ENCODE measurements at regions of chr10 and their contacts with region 1.

Region 1: GRCh38 chr10:91923371-91924211 is at the start of gene BTAF1:
- DNase-seq: peak; percentile 92 to 96
- ATAC-seq: peak; percentile 99 to 100 (median 100)
- H3K4me3 ChIP-seq: peak within 1 kb of the TSS; percentile 80
- H3K27ac ChIP-seq: peak within 1 kb of the TSS; percentile 95
- H3K4me1 ChIP-seq: peaks cover 26% of the 10 kb centered on the region
- H3K27me3 ChIP-seq: no peaks in the 10 kb centered on the region
- CTCF ChIP-seq: no peak
- total RNA-seq, gene BTAF1: 8.2 to 14.7 (median 10.8) TPM

Region 2: GRCh38 chr10:91724933-91725332 is 198.7 kb before region 1 on chr10:
- intact Hi-C with region 1: no loop called
- DNase-seq: no peak
- ATAC-seq: no peak
- H3K4me3 ChIP-seq: no peak overlapping the region
- H3K27ac ChIP-seq: no peak overlapping the region
- H3K4me1 ChIP-seq: no peaks in the 10 kb centered on the region
- H3K27me3 ChIP-seq: peaks cover 0 to 16% (median 6%) of the 10 kb centered on the region in 3 donors
- CTCF ChIP-seq: no peak

Region 3: DNA sequence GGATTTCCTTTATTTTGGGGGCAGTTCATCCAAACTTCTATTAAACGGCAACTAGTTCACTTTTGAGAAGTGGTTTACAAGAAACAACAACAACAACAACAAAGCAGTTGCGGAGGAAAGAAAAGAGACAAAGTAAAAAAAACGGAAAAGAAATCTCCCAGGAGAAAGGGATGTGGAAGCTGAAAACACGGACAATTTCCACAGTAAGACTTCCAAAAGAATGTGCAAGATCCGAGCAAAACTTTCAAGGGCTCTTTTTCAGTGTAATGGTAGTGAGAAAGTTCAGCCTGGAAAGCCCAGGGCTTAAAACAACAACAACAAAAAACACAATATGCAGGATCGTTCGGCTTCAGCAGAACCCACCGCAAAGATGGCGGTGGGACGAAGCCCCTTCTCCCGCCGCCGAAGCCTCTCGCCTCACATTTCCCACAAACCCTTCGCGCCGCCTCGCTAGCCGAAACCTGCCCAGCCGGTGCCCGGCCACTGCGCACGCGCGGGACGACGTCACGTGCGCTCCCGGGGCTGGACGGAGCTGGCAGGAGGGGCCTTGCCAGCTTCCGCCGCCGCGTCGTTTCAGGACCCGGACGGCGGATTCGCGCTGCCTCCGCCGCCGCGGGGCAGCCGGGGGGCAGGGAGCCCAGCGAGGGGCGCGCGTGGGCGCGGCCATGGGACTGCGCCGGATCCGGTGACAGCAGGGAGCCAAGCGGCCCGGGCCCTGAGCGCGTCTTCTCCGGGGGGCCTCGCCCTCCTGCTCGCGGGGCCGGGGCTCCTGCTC is 125.5 kb before region 1 on chr10 and contains the start of gene TNKS2:
- intact Hi-C with region 1: loop called in 1 of 2 experiments (anchors 5 kb)
- DNase-seq: peak; percentile 96 to 97
- ATAC-seq: peak; percentile 81 to 95 (median 90)
- H3K4me3 ChIP-seq: peak within 1 kb of the TSS; percentile 93
- H3K27ac ChIP-seq: peak within 1 kb of the TSS; percentile 96
- H3K4me1 ChIP-seq: peaks cover 24% of the 10 kb centered on the region
- H3K27me3 ChIP-seq: no peaks in the 10 kb centered on the region
- CTCF ChIP-seq: no peak
- total RNA-seq, gene TNKS2: 29.8 to 49.5 (median 35.8) TPM

Measured in psoas muscle (tissue), 8 donors.